Caco-2 (cell line): ENCODE measurements at regions of chr2 and their contacts with region 1.

Region 1: GRCh38 chr2:231680992-231681853 is 27.1 kb upstream of the PTMA start:
- DNase-seq: peak; percentile 91 to 94
- H3K4me3 ChIP-seq: peak overlapping the region; percentile 67
- H3K4me3 Mint-ChIP-seq: peak overlapping the region; percentile 81
- H3K27ac Mint-ChIP-seq: peak overlapping the region; percentile 93
- H3K4me1 ChIP-seq: peaks cover 25% of the 10 kb centered on the region
- H3K4me1 Mint-ChIP-seq: peaks cover 16% of the 10 kb centered on the region
- H3K27me3 ChIP-seq: no peaks in the 10 kb centered on the region
- H3K27me3 Mint-ChIP-seq: no peaks in the 10 kb centered on the region
- CTCF ChIP-seq: no peak

Region 2: DNA sequence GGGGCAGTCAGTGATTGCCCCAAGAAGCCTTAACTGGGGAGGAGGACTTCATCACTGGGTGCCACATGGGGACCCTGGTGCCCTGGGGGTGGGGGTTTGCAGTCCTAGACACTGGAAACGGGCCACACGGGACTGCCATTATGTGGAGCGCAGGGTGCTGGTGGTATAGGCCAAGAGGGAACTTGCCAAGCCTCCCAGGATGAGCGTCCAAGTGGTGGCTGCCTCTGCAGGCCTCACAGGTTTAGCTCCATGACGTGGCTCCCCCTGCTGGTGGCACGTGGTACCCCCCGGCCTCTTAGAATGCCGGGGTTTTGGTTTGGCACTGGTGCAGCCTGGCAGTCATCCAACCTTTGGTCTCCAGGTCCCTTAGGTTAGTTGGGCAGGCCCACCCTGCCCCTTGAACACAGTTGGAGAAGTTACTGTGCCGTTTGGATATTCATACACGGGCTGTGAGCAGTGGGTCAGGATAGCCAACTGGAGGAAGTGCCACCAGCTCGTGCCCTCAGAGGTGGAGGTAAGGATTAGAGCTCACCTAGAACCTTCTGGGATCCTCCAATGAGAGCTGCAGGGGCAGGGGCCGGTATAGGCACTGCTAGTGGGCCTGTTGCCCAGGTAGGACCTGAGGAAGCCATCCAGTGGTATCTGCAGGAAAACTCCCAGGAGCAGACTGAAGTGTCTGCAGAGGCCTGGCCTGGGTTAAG is 32.7 kb after region 1 on chr2:
- CTCF ChIA-PET with region 1: interaction called, 55 read pairs
- POLR2A ChIA-PET with region 1: interaction called, 20 read pairs
- intact Hi-C with region 1: loop called (anchors 1 kb)
- DNase-seq: peak; percentile 81 to 82
- H3K4me3 ChIP-seq: no peak overlapping the region
- H3K4me3 Mint-ChIP-seq: peak overlapping the region; percentile 31
- H3K27ac Mint-ChIP-seq: peak overlapping the region; percentile 45
- H3K4me1 ChIP-seq: peaks cover 11% of the 10 kb centered on the region
- H3K4me1 Mint-ChIP-seq: peaks cover 16% of the 10 kb centered on the region
- H3K27me3 ChIP-seq: no peaks in the 10 kb centered on the region
- H3K27me3 Mint-ChIP-seq: no peaks in the 10 kb centered on the region
- CTCF ChIP-seq: peak; percentile 74 to 82